Transverse colon (tissue), 4 donors: ENCODE measurements at regions of chr2 and their contacts with region 1.

Region 1: GRCh38 chr2:234544659-234545611 is 48.1 kb upstream of the ARL4C start:
- DNase-seq: peak; percentile 77
- H3K4me3 ChIP-seq: no peak overlapping the region
- H3K27ac ChIP-seq: no peak overlapping the region
- H3K4me1 ChIP-seq: no peaks in the 10 kb centered on the region
- H3K27me3 ChIP-seq: peaks cover 5% of the 10 kb centered on the region
- CTCF ChIP-seq: peak; percentile 80 to 95 (median 94)
- EP300 ChIP-seq: no peak
- POLR2A ChIP-seq: no peak

Region 2: DNA sequence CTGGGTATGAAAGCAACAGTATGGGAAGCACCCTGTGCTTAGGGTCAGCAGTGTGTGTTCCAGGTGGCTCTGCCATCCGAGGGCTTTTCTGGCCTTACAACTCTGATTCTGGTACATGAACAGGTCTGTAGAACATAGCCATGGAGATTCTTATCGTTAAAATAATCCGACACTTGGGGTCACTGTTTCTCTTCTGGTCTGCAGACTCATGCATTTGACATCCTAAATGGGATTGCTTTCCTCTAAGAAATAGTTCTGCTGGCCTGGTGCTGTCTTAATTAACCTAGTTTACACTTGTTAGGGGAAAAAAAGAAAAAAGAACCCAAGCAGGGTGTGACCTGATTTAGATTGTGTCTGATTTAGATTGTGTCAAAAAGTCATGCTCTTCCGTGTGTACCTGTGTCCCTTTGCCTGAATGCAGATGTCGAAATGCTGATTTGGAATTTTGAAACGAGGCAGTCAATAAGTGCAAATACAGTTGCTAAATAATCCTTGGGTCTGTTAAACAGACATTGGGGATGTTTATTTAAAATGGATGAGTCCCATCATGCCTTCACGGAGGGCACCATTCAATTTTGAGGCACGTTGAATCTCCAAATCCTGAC is 568.1 kb before region 1 on chr2:
- in situ Hi-C with region 1: loop called in 2 of 4 experiments (anchors 25 kb)
- intact Hi-C with region 1: no loop called
- DNase-seq: no peak
- H3K4me3 ChIP-seq: no peak overlapping the region
- H3K27ac ChIP-seq: no peak overlapping the region
- H3K4me1 ChIP-seq: no peaks in the 10 kb centered on the region
- H3K27me3 ChIP-seq: no peaks in the 10 kb centered on the region
- CTCF ChIP-seq: peak in 4 of 5 experiments; percentile 18 to 35 (median 26)
- EP300 ChIP-seq: no peak
- POLR2A ChIP-seq: no peak

Region 3: DNA sequence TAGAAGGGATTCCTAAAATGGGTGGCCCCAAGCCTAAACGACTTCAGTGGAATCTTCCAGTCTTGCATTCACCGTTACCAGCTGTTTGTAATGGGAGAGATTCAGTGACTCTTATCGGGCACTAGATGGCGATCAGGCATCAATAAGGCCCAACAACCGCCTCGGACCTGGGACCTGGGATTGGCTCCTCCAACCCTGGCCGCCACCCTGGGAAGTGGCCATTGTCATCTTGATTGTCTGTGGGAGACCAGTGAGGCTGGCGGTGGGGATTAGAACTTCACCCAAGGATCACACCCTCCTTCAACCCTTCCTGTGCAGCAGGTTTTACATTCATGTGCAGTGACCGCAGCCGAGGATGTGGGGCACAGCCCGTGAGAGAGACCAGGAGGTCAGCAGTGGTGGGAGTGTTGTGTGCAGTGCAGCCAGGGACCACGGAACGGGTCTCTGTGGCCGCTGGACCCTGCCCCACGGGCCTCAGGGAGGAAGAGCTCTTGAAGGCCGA is 409.2 kb before region 1 on chr2:
- in situ Hi-C with region 1: no loop called
- intact Hi-C with region 1: loop called (anchors 10 kb)
- DNase-seq: peak; percentile 62
- H3K4me3 ChIP-seq: no peak overlapping the region
- H3K27ac ChIP-seq: no peak overlapping the region
- H3K4me1 ChIP-seq: no peaks in the 10 kb centered on the region
- H3K27me3 ChIP-seq: peaks cover 5% of the 10 kb centered on the region
- CTCF ChIP-seq: peak; percentile 65 to 83 (median 76)
- EP300 ChIP-seq: no peak
- POLR2A ChIP-seq: no peak

Region 4: DNA sequence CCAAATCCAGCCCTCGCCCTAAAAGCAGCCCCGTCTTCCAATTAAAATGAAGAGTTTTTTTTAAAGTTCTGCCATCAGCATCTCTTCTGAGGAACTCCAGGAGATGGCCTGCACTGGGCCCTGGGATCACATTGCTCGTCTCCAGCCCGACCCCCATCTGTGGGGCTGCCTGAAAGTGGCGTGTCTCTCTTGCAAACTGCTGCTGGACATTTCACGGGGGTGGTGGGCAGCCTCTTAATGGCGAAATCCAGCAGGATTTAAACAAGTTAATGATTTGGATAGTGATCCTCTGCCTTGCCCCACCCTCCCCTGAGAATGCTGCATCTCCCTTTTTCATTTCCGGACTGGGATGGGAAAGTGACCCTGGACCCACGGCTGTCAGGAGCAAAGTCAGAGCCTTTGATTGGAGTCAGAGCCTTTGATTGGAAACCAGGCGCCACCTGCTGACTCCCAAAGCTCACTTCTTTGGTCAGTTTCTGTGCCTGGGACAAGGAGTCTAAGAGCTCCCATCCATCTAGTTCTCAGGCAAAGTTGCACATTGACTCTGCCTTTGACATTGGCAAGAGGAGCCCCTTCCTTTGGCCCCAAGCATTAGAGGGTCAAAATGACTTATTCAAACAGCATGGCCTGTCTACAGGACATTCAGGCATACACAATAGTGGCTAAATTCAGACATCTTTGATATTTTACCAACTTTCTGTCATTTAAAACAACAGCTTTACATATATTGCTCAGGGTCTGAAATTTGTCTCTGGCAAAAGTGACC is 562.1 kb after region 1 on chr2:
- in situ Hi-C with region 1: loop called in 3 of 4 experiments (anchors 5 to 10 kb)
- intact Hi-C with region 1: no loop called
- DNase-seq: peak; percentile 62
- H3K4me3 ChIP-seq: no peak overlapping the region
- H3K27ac ChIP-seq: no peak overlapping the region
- H3K4me1 ChIP-seq: no peaks in the 10 kb centered on the region
- H3K27me3 ChIP-seq: no peaks in the 10 kb centered on the region
- CTCF ChIP-seq: peak; percentile 54 to 67 (median 57)
- EP300 ChIP-seq: no peak
- POLR2A ChIP-seq: no peak

Region 5: GRCh38 chr2:235116885-235117492 is 572.1 kb after region 1 on chr2:
- in situ Hi-C with region 1: loop called in 2 of 4 experiments (anchors 5 to 10 kb)
- intact Hi-C with region 1: loop called (anchors 5 kb)
- DNase-seq: no peak
- H3K4me3 ChIP-seq: no peak overlapping the region
- H3K27ac ChIP-seq: no peak overlapping the region
- H3K4me1 ChIP-seq: peaks cover 0 to 4% (median 0%) of the 10 kb centered on the region in 4 donors
- H3K27me3 ChIP-seq: peaks cover 4% of the 10 kb centered on the region
- CTCF ChIP-seq: peak; percentile 52 to 76 (median 65)
- EP300 ChIP-seq: no peak
- POLR2A ChIP-seq: no peak

Region 6: DNA sequence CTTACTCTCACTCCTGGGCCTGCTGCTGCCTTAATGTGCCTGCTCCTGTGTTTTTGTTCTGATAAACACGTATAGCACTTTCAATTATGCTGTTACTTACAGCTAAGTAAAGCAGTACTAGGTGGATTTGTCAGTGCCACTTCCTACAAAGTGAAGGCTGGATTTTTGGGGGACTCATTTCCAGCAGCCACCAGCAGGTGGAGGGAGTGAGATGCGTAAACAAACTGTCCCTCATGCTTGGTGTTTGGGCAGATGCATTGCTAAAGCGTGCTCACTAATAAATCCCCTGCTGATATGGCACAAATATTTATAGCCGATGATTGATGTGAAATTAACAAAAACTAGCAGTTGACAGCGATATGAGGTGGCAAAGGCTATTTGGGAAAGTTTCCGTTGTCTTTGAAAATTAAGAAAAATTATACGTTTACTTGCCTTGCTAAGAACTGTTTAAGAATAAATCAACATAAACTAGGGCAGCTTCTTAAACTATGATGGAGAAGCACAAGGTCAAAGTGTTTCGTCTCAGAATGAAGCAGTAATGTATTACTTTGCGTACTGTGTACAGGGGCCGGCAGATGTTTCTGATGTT is 1050.6 kb after region 1 on chr2:
- in situ Hi-C with region 1: loop called in 2 of 4 experiments (anchors 25 kb)
- intact Hi-C with region 1: no loop called
- DNase-seq: peak; percentile 76
- H3K4me3 ChIP-seq: no peak overlapping the region
- H3K27ac ChIP-seq: no peak overlapping the region
- H3K4me1 ChIP-seq: peaks cover 0 to 22% (median 4%) of the 10 kb centered on the region in 4 donors
- H3K27me3 ChIP-seq: no peaks in the 10 kb centered on the region
- CTCF ChIP-seq: peak; percentile 77 to 92 (median 83)
- EP300 ChIP-seq: no peak
- POLR2A ChIP-seq: no peak

Region 7: GRCh38 chr2:235746257-235747084 is 1201.5 kb after region 1 on chr2:
- in situ Hi-C with region 1: loop called in 1 of 4 experiments (anchors 25 kb)
- intact Hi-C with region 1: no loop called
- DNase-seq: peak; percentile 68
- H3K4me3 ChIP-seq: no peak overlapping the region
- H3K27ac ChIP-seq: peak overlapping the region in 1 of 4 donors; percentile 51
- H3K4me1 ChIP-seq: peaks cover 0 to 10% (median 3%) of the 10 kb centered on the region in 4 donors
- H3K27me3 ChIP-seq: no peaks in the 10 kb centered on the region
- CTCF ChIP-seq: peak; percentile 71 to 79 (median 76)
- EP300 ChIP-seq: no peak
- POLR2A ChIP-seq: no peak